Ascending aorta (tissue), 2 donors: ENCODE measurements at regions of chr12 and their contacts with region 1.

Region 1: DNA sequence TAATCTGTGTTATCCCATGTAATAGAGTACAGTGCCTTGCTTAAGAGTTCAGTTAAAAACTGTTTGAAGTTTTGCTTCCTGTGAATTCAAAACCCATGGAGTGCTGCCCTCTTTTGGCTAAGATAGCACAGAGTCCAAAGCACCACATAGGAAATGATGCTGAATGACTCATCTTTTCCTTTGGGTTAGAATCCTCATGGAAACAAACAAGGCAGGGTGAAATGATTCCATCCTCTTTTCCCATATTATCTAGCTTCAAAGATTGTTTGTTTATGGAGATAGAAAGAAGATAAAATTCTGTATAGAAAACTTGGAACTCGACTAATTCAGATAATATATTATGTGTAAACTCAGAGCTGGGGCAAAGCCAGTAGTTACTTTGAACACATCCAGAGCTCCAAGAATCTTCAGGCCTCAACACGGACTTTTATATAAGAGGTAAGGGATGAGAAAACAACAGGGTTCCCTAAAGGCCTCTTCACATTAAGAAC is 87.4 kb downstream of the OTOGL start:
- DNase-seq: peak in 1 of 2 donors; percentile 88
- H3K4me3 ChIP-seq: peak overlapping the region in 1 of 2 donors; percentile 28
- H3K27ac ChIP-seq: peak overlapping the region; percentile 82 to 84
- H3K4me1 ChIP-seq: peaks cover 6 to 14% of the 10 kb centered on the region in 2 donors
- H3K27me3 ChIP-seq: no peaks in the 10 kb centered on the region
- CTCF ChIP-seq: peak; percentile 65 to 78 (median 69)

Region 2: DNA sequence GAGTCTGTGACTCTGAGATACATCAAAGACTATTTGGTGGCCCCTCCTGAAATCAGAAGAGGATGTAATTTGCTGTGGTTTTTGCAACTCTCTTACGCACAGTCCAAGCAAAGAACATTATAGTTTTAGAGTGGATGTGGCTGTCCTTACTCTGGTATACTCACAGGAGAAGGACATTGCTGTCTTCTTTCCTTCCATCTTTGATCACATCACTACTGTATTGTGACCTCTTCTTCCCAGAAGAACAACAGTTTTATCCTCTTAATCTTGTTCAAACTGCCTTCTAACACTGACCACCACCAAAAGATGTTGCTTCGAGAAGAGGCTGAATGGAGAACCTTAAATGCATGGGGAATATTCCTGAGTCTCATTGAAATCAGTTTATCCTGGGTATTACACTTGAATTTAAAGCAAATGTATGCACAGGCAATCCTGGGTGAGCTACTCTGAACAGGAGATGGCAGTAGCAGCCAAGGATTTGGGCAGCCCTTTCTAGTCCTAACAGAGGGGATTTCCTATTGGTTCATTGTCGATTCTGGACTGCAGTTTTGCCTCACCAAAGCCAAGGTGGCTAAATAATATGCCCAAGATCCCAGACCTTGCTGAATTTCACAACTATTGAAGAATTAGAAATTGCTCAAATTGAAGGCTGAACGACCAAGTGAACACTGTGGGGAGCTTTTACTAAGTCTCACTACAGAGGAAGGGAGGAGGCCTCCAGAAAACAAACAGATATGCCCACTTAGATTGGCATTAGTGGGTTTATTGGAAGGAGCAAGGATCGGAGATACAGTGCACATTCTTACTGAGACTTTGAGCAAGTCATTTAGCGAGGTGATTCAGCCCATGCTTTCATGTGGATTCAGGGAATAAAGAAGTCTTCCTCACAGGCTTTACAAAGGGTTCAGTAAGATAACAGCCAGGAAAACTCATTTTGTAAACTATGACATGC is 778.8 kb before region 1 on chr12:
- intact Hi-C with region 1: loop called (anchors 5 kb)
- DNase-seq: peak in 1 of 2 donors; percentile 77
- H3K4me3 ChIP-seq: no peak overlapping the region
- H3K27ac ChIP-seq: peak overlapping the region; percentile 63 to 65
- H3K4me1 ChIP-seq: peaks cover 3 to 17% of the 10 kb centered on the region in 2 donors
- H3K27me3 ChIP-seq: no peaks in the 10 kb centered on the region
- CTCF ChIP-seq: peak; percentile 55 to 76 (median 57)

Region 3: GRCh38 chr12:79555028-79555930 is 631.5 kb before region 1 on chr12:
- intact Hi-C with region 1: loop called (anchors 2 kb)
- DNase-seq: no peak
- H3K4me3 ChIP-seq: no peak overlapping the region
- H3K27ac ChIP-seq: peak overlapping the region; percentile 67 to 76
- H3K4me1 ChIP-seq: peaks cover 3 to 59% of the 10 kb centered on the region in 2 donors
- H3K27me3 ChIP-seq: no peaks in the 10 kb centered on the region
- CTCF ChIP-seq: peak; percentile 38 to 70 (median 61)

Region 4: GRCh38 chr12:79737875-79738718 is 448.7 kb before region 1 on chr12:
- intact Hi-C with region 1: loop called (anchors 5 kb)
- DNase-seq: no peak
- H3K4me3 ChIP-seq: no peak overlapping the region
- H3K27ac ChIP-seq: no peak overlapping the region
- H3K4me1 ChIP-seq: no peaks in the 10 kb centered on the region
- H3K27me3 ChIP-seq: no peaks in the 10 kb centered on the region
- CTCF ChIP-seq: peak; percentile 39 to 67 (median 40)

Region 5: GRCh38 chr12:79886917-79887519 is 299.8 kb before region 1 on chr12:
- intact Hi-C with region 1: loop called (anchors 2 kb)
- DNase-seq: no peak
- H3K4me3 ChIP-seq: no peak overlapping the region
- H3K27ac ChIP-seq: no peak overlapping the region
- H3K4me1 ChIP-seq: peaks cover 0 to 56% of the 10 kb centered on the region in 2 donors
- H3K27me3 ChIP-seq: no peaks in the 10 kb centered on the region
- CTCF ChIP-seq: peak in 2 of 3 experiments; percentile 49 to 55

Region 6: GRCh38 chr12:80044694-80045046 is 142.1 kb before region 1 on chr12:
- intact Hi-C with region 1: loop called (anchors 2 kb)
- DNase-seq: no peak
- H3K4me3 ChIP-seq: no peak overlapping the region
- H3K27ac ChIP-seq: peak overlapping the region; percentile 79 to 80
- H3K4me1 ChIP-seq: peaks cover 0 to 14% of the 10 kb centered on the region in 2 donors
- H3K27me3 ChIP-seq: no peaks in the 10 kb centered on the region
- CTCF ChIP-seq: no peak

Region 7: GRCh38 chr12:80165746-80166145 is 21.0 kb before region 1 on chr12:
- intact Hi-C with region 1: no loop called
- DNase-seq: no peak
- H3K4me3 ChIP-seq: no peak overlapping the region
- H3K27ac ChIP-seq: no peak overlapping the region
- H3K4me1 ChIP-seq: no peaks in the 10 kb centered on the region
- H3K27me3 ChIP-seq: no peaks in the 10 kb centered on the region
- CTCF ChIP-seq: no peak